Caco-2 (cell line): ENCODE measurements at regions of chr11 and their contacts with region 1.

Region 1: GRCh38 chr11:79762279-79762921 is 321.6 kb upstream of the TENM4 start:
- DNase-seq: peak in 1 of 2 experiments; percentile 20
- H3K4me3 ChIP-seq: no peak overlapping the region
- H3K4me3 Mint-ChIP-seq: no peak overlapping the region
- H3K27ac Mint-ChIP-seq: no peak overlapping the region
- H3K4me1 ChIP-seq: no peaks in the 10 kb centered on the region
- H3K4me1 Mint-ChIP-seq: no peaks in the 10 kb centered on the region
- H3K27me3 ChIP-seq: no peaks in the 10 kb centered on the region
- H3K27me3 Mint-ChIP-seq: peaks cover 4% of the 10 kb centered on the region
- CTCF ChIP-seq: peak in 1 of 2 experiments; percentile 29

Region 2: DNA sequence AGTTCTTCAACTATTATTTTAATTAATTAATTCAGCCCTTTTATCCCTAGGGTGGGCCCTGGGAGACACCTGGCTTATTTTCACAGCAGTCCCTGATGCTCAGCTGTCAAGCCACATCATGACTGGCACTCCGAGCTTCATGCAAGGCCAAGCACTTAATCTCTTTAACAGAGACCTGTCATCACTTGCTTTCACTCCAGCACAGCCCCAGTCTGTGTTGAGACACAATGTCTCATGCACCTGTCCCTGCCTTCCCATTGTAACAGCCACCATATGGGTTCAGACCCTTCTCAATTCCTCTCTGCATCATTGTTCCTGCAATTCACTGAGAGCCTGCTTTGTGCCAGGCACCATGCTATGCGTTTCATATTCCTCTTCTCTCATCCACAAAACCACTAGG is 99.4 kb before region 1 on chr11:
- CTCF ChIA-PET with region 1: no interaction called
- POLR2A ChIA-PET with region 1: no interaction called
- intact Hi-C with region 1: no loop called
- DNase-seq: no peak
- H3K4me3 ChIP-seq: no peak overlapping the region
- H3K4me3 Mint-ChIP-seq: no peak overlapping the region
- H3K27ac Mint-ChIP-seq: no peak overlapping the region
- H3K4me1 ChIP-seq: no peaks in the 10 kb centered on the region
- H3K4me1 Mint-ChIP-seq: no peaks in the 10 kb centered on the region
- H3K27me3 ChIP-seq: no peaks in the 10 kb centered on the region
- H3K27me3 Mint-ChIP-seq: no peaks in the 10 kb centered on the region
- CTCF ChIP-seq: no peak

Region 3: GRCh38 chr11:80155412-80156017 is 393.1 kb after region 1 on chr11:
- CTCF ChIA-PET with region 1: no interaction called
- POLR2A ChIA-PET with region 1: no interaction called
- intact Hi-C with region 1: loop called (anchors 1 kb)
- DNase-seq: peak in 1 of 2 experiments; percentile 63
- H3K4me3 ChIP-seq: no peak overlapping the region
- H3K4me3 Mint-ChIP-seq: no peak overlapping the region
- H3K27ac Mint-ChIP-seq: no peak overlapping the region
- H3K4me1 ChIP-seq: no peaks in the 10 kb centered on the region
- H3K4me1 Mint-ChIP-seq: no peaks in the 10 kb centered on the region
- H3K27me3 ChIP-seq: no peaks in the 10 kb centered on the region
- H3K27me3 Mint-ChIP-seq: peaks cover 5% of the 10 kb centered on the region
- CTCF ChIP-seq: peak; percentile 61 to 73